Endothelial cell of umbilical vein (primary cell): ENCODE measurements at regions of chr20 and their contacts with region 1.

Region 1: GRCh38 chr20:17898548-17898994 is 70.0 kb downstream of the SNX5 start:
- DNase-seq: peak; percentile 70
- H3K4me3 ChIP-seq: no peak overlapping the region
- H3K27ac ChIP-seq: no peak overlapping the region
- H3K4me1 ChIP-seq: peaks cover 25% of the 10 kb centered on the region
- H3K27me3 ChIP-seq: peaks cover 4 to 5% of the 10 kb centered on the region in 2 experiments
- CTCF ChIP-seq: peak; percentile 81 to 86
- POLR2A ChIP-seq: no peak

Region 2: GRCh38 chr20:17654649-17655285 is 243.8 kb before region 1 on chr20:
- CTCF ChIA-PET with region 1: interaction called, 24 read pairs
- POLR2A ChIA-PET with region 1: no interaction called
- dilution Hi-C with region 1: no loop called
- intact Hi-C with region 1: loop called (anchors 1 kb)
- DNase-seq: peak; percentile 66
- H3K4me3 ChIP-seq: no peak overlapping the region
- H3K27ac ChIP-seq: peak overlapping the region; percentile 29
- H3K4me1 ChIP-seq: peaks cover 5% of the 10 kb centered on the region
- H3K27me3 ChIP-seq: no peaks in the 10 kb centered on the region
- CTCF ChIP-seq: peak; percentile 75 to 78
- POLR2A ChIP-seq: no peak

Region 3: DNA sequence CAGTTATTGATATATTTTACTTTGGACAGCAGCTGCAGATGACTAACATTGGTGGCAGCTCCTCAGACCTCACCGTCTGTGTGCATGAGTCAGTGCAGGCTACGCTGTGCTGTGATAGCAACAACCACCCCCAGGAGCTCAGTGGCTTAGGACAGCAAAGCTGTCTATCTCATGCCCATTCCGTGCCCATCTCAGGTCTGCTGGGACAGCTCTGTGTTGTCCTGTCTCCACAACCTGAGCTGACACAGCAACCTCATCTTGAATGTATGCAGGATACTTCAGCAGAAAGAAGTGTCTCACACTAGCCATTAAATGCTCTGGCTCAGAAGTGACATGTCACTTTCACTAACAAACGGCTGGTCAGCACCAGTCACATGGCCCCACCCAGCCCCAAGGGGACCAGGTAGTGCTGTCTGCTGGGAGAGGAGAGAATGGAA is 151.1 kb before region 1 on chr20:
- CTCF ChIA-PET with region 1: interaction called, 6 read pairs
- POLR2A ChIA-PET with region 1: no interaction called
- dilution Hi-C with region 1: no loop called
- intact Hi-C with region 1: loop called (anchors 1 kb)
- DNase-seq: peak; percentile 85
- H3K4me3 ChIP-seq: no peak overlapping the region
- H3K27ac ChIP-seq: peak overlapping the region; percentile 43
- H3K4me1 ChIP-seq: peaks cover 24% of the 10 kb centered on the region
- H3K27me3 ChIP-seq: no peaks in the 10 kb centered on the region
- CTCF ChIP-seq: no peak
- POLR2A ChIP-seq: no peak

Region 4: DNA sequence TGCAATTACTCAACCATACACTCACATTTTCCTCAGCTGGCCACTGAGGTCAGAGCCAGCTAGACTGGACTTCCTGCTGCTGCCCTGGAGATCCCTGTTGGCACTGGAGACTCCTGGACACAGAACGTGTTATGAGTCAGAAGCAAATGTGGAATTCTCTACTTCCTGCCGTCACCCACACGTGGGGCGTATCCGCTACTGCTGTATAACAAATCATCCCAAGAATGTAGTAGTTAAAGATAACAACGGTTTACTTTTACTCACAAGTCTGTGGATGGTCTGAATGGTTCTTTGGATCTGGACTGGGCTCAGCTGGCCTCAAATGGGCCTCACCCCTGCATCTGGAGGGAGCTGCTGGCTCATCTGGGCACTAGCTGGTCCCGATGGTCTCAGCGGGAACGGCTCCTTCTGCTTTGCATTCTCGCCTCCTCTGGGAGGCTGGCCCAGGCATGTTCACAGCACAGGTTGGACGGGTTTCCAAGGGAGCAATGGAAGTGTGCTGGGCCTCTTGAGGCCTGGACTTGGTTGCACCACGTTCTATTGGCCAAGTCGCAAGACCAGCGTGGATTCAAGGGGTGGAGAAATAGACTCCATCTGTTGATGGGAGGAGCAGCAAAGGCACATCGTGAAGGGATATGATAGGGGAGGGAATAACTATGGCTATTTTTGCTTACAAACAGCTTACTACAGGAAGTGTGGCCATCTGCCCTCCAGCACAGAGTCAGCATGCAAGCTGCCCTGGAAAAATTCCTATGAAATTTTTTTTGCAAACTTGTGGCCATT is 48.5 kb before region 1 on chr20:
- CTCF ChIA-PET with region 1: interaction called, 6 read pairs
- POLR2A ChIA-PET with region 1: no interaction called
- dilution Hi-C with region 1: no loop called
- intact Hi-C with region 1: loop called (anchors 1 kb)
- DNase-seq: peak; percentile 97
- H3K4me3 ChIP-seq: no peak overlapping the region
- H3K27ac ChIP-seq: peak overlapping the region; percentile 80
- H3K4me1 ChIP-seq: peaks cover 26% of the 10 kb centered on the region
- H3K27me3 ChIP-seq: no peaks in the 10 kb centered on the region
- CTCF ChIP-seq: no peak
- POLR2A ChIP-seq: no peak

Region 5: GRCh38 chr20:17938871-17939619 is 40.5 kb after region 1 on chr20:
- CTCF ChIA-PET with region 1: interaction called, 12 read pairs
- POLR2A ChIA-PET with region 1: no interaction called
- dilution Hi-C with region 1: no loop called
- intact Hi-C with region 1: loop called (anchors 2 kb)
- DNase-seq: peak; percentile 70
- H3K4me3 ChIP-seq: no peak overlapping the region
- H3K27ac ChIP-seq: no peak overlapping the region
- H3K4me1 ChIP-seq: peaks cover 14% of the 10 kb centered on the region
- H3K27me3 ChIP-seq: no peaks in the 10 kb centered on the region
- CTCF ChIP-seq: peak; percentile 85 to 97
- POLR2A ChIP-seq: peak; percentile 14